SK-N-SH (cell line): ENCODE measurements at regions of chr18 and their contacts with region 1.

Region 1: DNA sequence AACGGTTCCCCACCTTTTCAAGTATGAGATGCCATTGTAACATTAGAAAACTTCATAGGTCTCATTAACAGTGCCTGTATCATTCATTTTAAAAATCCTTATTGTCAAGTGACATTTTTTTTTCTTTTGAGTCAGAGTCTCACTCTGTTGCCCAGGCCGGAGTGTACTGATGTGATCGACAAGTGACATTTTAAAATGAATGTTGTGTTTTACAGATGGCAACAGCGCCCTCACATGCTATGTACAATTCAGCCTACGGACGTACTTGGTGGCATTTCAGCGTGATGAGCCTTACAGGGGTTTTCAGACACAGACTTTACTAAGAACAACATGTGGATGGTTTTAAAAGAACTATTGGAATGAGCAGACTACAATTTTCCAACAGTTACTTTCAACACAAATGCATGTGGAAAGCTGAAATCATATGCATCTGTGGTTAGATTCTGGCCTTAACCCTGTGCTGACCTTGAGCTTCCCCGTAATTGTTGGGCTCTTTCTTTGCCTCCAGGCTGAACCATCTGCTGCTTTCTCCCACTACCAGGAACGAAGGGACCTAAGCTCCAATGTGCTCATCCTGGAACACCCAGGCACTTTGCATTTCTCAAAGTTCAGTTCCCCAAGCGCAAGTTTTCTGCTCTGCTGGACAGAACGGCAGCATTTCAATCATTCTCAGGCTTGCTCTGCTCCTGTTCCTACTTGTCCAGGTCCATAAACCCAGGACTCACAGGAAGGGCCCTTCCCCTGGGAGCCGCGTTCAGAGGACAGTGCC is 119.9 kb upstream of the NDUFV2 start:
- DNase-seq: peak; percentile 61
- H3K4me3 ChIP-seq: no peak overlapping the region; a peak in 1 of 4 replicates
- H3K27ac ChIP-seq: no peak overlapping the region
- H3K4me1 ChIP-seq: peaks cover 4 to 6% of the 10 kb centered on the region in 2 experiments; a peak in 2 of 4 replicates
- H3K27me3 ChIP-seq: no peaks in the 10 kb centered on the region
- CTCF ChIP-seq: peak; percentile 73
- EP300 ChIP-seq: no peak
- RAD21 ChIP-seq: peak; percentile 91

Region 2: GRCh38 chr18:8643326-8643878 is 339.2 kb before region 1 on chr18:
- CTCF ChIA-PET with region 1: interaction called, 11 read pairs
- POLR2A ChIA-PET with region 1: no interaction called
- DNase-seq: no peak
- H3K4me3 ChIP-seq: no peak overlapping the region; a peak in 1 of 4 replicates
- H3K27ac ChIP-seq: peak overlapping the region in 1 of 2 experiments; percentile 26; a peak in 1 of 4 replicates
- H3K4me1 ChIP-seq: 0 out of 4 replicates have a peak, but pooled peaks cover 0 to 8% of the 10 kb centered on the region in 2 experiments
- H3K27me3 ChIP-seq: no peaks in the 10 kb centered on the region
- CTCF ChIP-seq: no peak
- EP300 ChIP-seq: no peak
- RAD21 ChIP-seq: no peak

Region 3: GRCh38 chr18:8696749-8697211 is 285.8 kb before region 1 on chr18:
- CTCF ChIA-PET with region 1: interaction called, 56 read pairs
- POLR2A ChIA-PET with region 1: no interaction called
- DNase-seq: peak; percentile 85
- H3K4me3 ChIP-seq: no peak overlapping the region; a peak in 1 of 4 replicates
- H3K27ac ChIP-seq: no peak overlapping the region
- H3K4me1 ChIP-seq: peaks cover 4 to 9% of the 10 kb centered on the region in 2 experiments; a peak in 2 of 4 replicates
- H3K27me3 ChIP-seq: no peaks in the 10 kb centered on the region
- CTCF ChIP-seq: peak; percentile 94
- EP300 ChIP-seq: no peak
- RAD21 ChIP-seq: peak; percentile 81

Region 4: DNA sequence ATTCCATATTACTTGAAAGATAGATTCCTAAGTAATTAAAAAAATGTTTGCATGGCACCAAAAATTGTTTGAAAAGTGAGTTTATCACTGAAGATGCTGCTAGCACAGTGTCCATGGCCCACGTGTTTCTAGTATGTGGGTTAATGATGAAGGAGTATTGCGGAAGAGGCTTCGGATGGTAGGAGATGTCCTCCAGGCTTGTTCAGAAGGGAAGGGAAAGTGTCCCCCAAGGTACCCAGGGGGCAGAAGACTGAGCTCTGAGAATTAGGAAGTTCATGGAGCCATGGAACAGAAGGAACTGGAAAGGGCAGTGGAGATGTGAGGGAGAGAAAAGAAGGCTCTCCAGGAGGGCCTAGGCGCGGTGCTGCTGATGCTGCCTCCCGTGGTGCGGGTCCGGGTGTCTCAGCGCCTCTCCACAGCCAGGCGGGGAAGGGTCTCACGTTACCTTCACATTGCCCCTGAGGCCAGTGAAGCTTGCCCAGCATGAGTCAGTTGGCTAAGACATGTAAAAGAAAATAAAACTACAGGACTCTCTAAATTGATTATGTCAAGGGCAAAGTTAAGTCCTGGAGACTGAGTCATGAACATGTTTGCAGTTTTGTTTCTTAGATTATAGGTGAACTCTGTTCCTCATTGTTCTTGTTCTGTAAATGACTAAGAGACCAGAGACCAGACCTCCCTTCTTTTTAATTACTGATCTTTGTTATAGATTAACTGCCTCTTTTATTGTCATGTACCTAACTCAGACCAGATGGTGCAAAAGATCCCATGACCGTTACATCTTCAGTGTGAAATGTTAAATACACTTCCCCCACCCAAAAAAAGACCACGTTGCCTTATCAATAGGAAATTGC is 188.2 kb before region 1 on chr18:
- CTCF ChIA-PET with region 1: interaction called, 10 read pairs
- POLR2A ChIA-PET with region 1: no interaction called
- DNase-seq: peak; percentile 64
- H3K4me3 ChIP-seq: no peak overlapping the region; a peak in 1 of 4 replicates
- H3K27ac ChIP-seq: peak overlapping the region; percentile 91 to 94
- H3K4me1 ChIP-seq: peaks cover 53 to 68% of the 10 kb centered on the region in 2 experiments
- H3K27me3 ChIP-seq: no peaks in the 10 kb centered on the region
- CTCF ChIP-seq: no peak
- EP300 ChIP-seq: peak; percentile 78 to 88; a peak in 3 of 4 replicates
- RAD21 ChIP-seq: no peak

Region 5: DNA sequence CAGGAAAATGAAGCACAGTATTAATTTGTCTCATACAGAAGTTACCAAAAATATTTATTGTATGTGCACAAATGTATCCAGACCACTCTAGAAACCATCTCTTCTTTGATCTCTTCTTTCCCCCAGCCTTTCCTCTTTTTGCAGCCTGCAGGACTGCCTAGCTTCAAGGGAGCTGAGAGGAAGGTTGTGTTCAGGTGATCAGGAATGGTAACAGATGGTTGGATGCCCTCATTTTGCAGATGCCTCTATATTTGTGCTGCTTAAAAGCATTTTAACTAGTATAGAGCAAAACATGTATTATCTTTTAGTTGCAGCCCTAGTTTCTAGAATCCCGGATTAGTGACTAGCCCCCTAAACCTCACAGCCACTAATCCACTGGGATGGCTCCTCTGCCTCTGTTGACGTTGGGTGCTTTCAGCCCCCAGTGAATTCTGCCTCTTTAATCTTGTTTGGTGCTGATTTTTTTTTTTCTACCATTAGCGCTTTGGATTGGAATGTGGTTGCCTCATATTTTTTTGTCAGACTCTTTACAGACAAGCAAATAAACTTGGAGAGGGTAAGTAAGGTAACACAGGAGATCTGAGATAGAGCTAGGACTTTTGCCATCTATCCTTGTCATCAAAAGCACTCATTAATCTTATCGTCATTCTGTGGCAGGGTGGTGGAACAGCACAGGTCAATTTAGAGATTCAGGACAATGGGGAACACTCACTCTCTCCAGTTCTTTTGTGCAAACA is 16.0 kb after region 1 on chr18:
- CTCF ChIA-PET with region 1: interaction called, 29 read pairs
- POLR2A ChIA-PET with region 1: no interaction called
- DNase-seq: no peak
- H3K4me3 ChIP-seq: no peak overlapping the region
- H3K27ac ChIP-seq: no peak overlapping the region
- H3K4me1 ChIP-seq: no peaks in the 10 kb centered on the region
- H3K27me3 ChIP-seq: no peaks in the 10 kb centered on the region
- CTCF ChIP-seq: no peak
- EP300 ChIP-seq: no peak
- RAD21 ChIP-seq: no peak